ENCODE measurements at regions of chr4 and their contacts with region 1.

Region 1: GRCh38 chr4:153573881-153574802 is 108.0 kb downstream of the TMEM131L start:
- DNase-seq: peak; percentile 28
- H3K4me3 Mint-ChIP-seq: no peak overlapping the region
- H3K27ac Mint-ChIP-seq: peak overlapping the region; percentile 41
- H3K4me1 Mint-ChIP-seq: peaks cover 58% of the 10 kb centered on the region
- H3K27me3 Mint-ChIP-seq: no peaks in the 10 kb centered on the region

Region 2: GRCh38 chr4:153142700-153143438 is 431.3 kb before region 1 on chr4:
- intact Hi-C with region 1: loop called (anchors 1 kb)
- DNase-seq: no peak
- H3K4me3 Mint-ChIP-seq: no peak overlapping the region
- H3K27ac Mint-ChIP-seq: no peak overlapping the region
- H3K4me1 Mint-ChIP-seq: no peaks in the 10 kb centered on the region
- H3K27me3 Mint-ChIP-seq: peaks cover 22% of the 10 kb centered on the region

Region 3: DNA sequence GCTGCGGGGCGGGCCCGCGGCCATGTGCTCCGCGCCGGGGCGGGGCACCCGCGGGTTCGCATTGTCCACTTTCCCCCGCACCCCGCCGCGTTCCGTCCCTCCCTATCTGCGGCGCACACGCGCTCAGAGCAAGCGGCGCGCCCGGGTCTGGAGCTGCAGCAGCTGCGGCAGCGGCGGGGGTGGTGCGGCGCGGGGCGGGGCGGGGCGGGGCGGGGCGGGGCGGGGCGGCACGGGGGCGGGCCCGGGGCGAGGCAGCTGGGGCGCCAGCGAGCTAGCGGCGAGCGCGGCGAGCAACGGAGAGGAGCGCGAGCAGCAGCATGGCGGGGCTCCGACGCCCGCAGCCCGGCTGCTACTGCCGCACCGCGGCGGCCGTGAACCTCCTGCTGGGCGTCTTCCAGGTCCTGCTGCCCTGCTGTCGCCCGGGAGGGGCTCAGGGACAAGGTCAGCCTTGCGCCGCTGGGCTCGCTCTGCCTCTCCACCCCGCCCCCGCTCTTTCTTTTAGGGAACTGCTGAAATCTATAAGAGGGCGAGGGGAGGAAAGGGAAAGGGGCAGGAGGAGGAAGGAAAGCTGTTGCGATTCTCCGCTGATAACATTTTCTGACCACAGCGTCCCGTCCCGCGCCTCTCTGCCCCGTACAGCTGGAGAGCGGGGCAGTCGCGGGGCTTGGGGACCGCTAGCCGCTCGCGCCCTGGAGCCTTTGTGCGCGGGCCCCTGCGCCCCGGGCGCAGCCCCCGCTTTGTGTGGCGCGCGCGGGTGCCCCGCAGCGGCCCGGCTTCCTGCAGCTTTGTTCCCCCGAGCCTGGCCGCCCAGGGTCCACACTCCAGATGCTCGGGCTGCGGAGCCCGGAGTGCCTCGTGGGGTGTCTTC is 107.8 kb before region 1 on chr4 and contains the start of gene TMEM131L:
- intact Hi-C with region 1: loop called (anchors 1 kb)
- DNase-seq: peak; percentile 63
- H3K4me3 Mint-ChIP-seq: peak within 1 kb of the TSS; percentile 89
- H3K27ac Mint-ChIP-seq: peak within 1 kb of the TSS; percentile 90
- H3K4me1 Mint-ChIP-seq: peaks cover 50% of the 10 kb centered on the region
- H3K27me3 Mint-ChIP-seq: no peaks in the 10 kb centered on the region
- total RNA-seq, gene TMEM131L: 39.5 and 42.2 TPM in 2 replicates

Region 4: DNA sequence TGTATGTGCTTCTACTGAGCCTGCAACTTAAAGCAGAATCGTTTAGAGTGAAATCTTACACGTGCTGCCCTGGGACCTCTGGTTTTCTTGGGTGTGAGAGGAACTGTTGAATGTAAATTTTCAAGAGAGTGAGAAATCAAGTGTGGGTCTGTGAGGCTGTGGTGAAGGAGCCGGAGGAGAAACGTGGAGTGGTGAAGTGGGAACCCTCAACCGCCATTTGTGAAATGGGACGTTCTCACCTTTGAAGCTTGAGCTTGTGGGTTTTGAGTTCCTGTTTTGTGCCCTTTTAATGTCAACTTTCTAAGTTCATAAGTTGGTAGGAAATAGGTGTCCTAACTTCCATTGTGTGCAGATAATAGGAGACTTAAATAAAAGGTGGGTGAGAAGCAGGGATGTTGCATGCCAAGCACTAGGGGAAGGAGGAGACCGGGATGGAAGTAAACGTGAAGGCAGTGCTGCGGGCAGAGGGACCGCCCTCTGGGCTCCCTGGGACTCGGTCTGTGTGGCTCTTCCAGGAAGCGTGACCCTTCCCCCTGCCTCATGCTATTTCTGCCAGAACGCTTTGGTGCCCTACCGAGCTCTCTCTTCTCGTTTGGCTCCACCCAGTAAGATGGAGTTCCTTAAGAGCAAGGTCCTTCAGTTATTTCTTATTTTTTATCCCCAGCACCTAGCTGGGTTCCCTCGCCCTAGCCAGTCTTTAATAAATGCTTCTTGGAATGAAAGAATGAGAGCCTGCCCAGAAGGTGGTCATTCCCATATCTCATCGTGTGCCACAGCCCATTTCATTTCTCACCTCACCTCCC is 51.9 kb before region 1 on chr4:
- intact Hi-C with region 1: loop called (anchors 1 kb)
- DNase-seq: peak; percentile 54
- H3K4me3 Mint-ChIP-seq: peak overlapping the region; percentile 60
- H3K27ac Mint-ChIP-seq: peak overlapping the region; percentile 91
- H3K4me1 Mint-ChIP-seq: peaks cover 89% of the 10 kb centered on the region
- H3K27me3 Mint-ChIP-seq: no peaks in the 10 kb centered on the region

Region 5: GRCh38 chr4:153549401-153549800 is 24.7 kb before region 1 on chr4:
- intact Hi-C with region 1: no loop called
- DNase-seq: no peak
- H3K4me3 Mint-ChIP-seq: no peak overlapping the region
- H3K27ac Mint-ChIP-seq: peak overlapping the region; percentile 75
- H3K4me1 Mint-ChIP-seq: peaks cover 19% of the 10 kb centered on the region
- H3K27me3 Mint-ChIP-seq: no peaks in the 10 kb centered on the region

Region 6: GRCh38 chr4:153616006-153616555 is 41.9 kb after region 1 on chr4:
- intact Hi-C with region 1: loop called (anchors 1 kb)
- DNase-seq: peak; percentile 16
- H3K4me3 Mint-ChIP-seq: no peak overlapping the region
- H3K27ac Mint-ChIP-seq: peak overlapping the region; percentile 29
- H3K4me1 Mint-ChIP-seq: peaks cover 26% of the 10 kb centered on the region
- H3K27me3 Mint-ChIP-seq: no peaks in the 10 kb centered on the region

Region 7: GRCh38 chr4:153628796-153629315 is 54.7 kb after region 1 on chr4:
- intact Hi-C with region 1: no loop called
- DNase-seq: no peak
- H3K4me3 Mint-ChIP-seq: no peak overlapping the region
- H3K27ac Mint-ChIP-seq: no peak overlapping the region
- H3K4me1 Mint-ChIP-seq: no peaks in the 10 kb centered on the region
- H3K27me3 Mint-ChIP-seq: no peaks in the 10 kb centered on the region

Region 8: DNA sequence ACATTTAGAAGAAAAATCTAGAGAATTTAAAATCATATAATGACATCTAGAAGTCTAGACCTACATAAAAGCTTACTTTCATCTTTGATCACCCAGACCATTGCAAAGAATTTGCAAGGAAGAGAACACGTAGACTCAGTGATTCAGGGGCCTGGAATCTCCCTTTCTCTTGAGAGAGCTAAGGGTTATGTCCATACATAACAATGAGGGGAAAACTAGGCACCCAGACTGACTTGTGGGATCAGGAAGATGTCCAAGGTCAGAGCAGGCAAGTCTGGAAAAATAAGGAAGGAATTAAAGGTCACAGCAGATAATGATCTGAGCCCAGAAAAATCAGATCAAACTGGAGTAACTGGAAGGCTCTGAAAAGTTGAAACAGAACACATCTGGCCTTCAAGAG is 413.1 kb after region 1 on chr4:
- intact Hi-C with region 1: no loop called
- DNase-seq: no peak
- H3K4me3 Mint-ChIP-seq: no peak overlapping the region
- H3K27ac Mint-ChIP-seq: no peak overlapping the region
- H3K4me1 Mint-ChIP-seq: no peaks in the 10 kb centered on the region
- H3K27me3 Mint-ChIP-seq: peaks cover 2% of the 10 kb centered on the region

Region 9: DNA sequence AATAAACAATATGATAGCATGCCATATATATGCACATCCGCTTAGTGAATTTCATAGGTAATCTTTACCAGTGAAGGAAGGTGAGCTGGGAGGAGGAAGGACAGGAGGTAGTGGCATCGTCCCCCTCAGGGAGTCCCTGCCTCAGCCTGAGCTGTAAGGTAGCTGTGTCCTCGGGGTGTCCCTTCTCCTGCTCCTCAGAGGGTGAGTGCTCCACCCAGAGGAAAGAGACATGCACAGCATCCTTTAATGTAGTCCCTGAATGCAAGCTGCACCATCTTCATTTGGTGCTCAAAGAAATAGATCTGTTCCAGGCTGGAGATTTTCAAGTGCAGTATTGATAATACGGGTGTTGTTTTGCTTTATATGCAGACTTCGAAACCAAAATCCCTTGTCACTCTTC is 545.2 kb after region 1 on chr4:
- intact Hi-C with region 1: no loop called
- DNase-seq: no peak
- H3K4me3 Mint-ChIP-seq: no peak overlapping the region
- H3K27ac Mint-ChIP-seq: no peak overlapping the region
- H3K4me1 Mint-ChIP-seq: no peaks in the 10 kb centered on the region
- H3K27me3 Mint-ChIP-seq: peaks cover 8% of the 10 kb centered on the region